ENCODE measurements at regions of chr18 and their contacts with region 1.

Region 1: DNA sequence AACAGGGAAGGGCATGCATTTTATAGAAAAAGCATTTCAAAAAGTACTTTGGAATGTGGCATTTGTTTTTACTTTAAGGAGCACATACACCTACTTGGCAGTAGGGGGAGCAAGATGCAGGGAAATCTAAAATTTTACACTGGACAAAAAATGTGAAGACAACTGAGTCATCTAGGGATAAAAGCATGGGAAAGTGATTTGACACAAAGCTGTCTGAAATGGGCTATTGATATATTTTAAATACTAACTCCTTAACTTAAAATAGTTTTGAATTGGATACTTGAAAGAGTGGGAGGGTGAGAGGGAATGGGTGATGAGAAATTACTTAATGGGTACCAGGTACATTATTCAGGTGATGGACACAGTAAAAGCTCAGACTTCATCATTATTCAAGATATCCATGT is 15.8 kb downstream of the TMEM200C start:
- DNase-seq: no peak
- ATAC-seq: peak in 1 of 8 donors; percentile 37
- H3K4me3 ChIP-seq: no peak overlapping the region
- H3K27ac ChIP-seq: no peak overlapping the region
- H3K4me1 ChIP-seq: no peaks in the 10 kb centered on the region
- H3K27me3 ChIP-seq: peaks cover 0 to 47% (median 24%) of the 10 kb centered on the region in 7 donors
- CTCF ChIP-seq: peak; percentile 70 to 89 (median 81)

Region 2: DNA sequence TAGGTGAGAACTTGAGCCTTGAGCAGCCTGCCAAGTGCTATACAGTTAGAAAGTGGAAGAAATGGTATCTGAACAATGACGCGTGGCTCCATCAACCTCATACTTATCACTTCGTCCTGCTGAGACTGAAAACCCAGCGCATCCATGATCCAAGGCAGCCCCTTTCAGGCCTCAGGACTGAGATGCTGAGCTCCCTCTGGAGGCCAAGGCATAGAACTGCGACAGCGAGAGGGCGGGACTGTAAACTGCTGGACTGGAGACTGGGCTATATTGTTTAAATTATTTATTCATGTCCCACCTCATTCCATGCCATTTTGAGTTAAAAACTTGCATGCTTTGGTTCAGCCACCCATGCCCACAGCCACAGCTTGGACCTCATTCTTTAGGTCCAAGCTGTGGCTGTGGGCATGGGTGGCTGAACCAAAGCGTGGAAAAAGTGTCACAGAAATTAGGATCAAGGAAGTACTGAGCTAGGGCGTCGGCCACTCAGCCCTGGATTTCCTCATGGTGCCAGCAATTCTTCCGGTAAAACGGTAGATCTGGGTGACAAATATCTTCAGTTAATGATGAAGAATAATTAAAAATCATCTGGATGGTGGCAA is 339.7 kb after region 1 on chr18:
- intact Hi-C with region 1: loop called (anchors 2 to 10 kb)
- DNase-seq: peak; percentile 12 to 15
- ATAC-seq: peak in 6 of 8 donors; percentile 43 to 80 (median 64)
- H3K4me3 ChIP-seq: no peak overlapping the region
- H3K27ac ChIP-seq: no peak overlapping the region
- H3K4me1 ChIP-seq: no peaks in the 10 kb centered on the region
- H3K27me3 ChIP-seq: no peaks in the 10 kb centered on the region
- CTCF ChIP-seq: peak; percentile 38 to 74 (median 66)

Region 3: DNA sequence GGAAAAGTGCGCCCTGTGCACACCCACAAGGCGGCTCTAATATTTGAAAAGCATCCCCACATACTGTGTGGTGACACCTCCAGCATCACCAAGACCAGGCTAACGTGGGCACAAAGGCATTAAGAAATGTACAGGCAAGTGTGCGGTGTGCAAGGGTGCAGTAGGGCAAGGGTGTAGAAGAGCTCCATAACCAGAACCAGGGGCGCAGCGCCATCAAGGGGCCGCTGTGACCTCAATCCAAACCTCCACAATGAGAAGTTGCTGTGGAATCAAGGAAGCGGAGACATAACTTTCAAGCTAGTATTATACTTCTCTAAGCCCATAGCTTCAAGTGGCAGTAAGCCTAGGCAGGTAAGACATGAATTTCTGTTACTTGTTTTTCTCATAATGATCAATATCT is 522.2 kb after region 1 on chr18:
- intact Hi-C with region 1: loop called in 2 of 10 experiments (anchors 10 kb)
- DNase-seq: no peak
- ATAC-seq: no peak
- H3K4me3 ChIP-seq: no peak overlapping the region
- H3K27ac ChIP-seq: no peak overlapping the region
- H3K4me1 ChIP-seq: peaks cover 0 to 10% (median 0%) of the 10 kb centered on the region in 9 donors
- H3K27me3 ChIP-seq: peaks cover 0 to 7% (median 0%) of the 10 kb centered on the region in 7 donors
- CTCF ChIP-seq: peak in 5 of 9 donors; percentile 14 to 48 (median 36)

Region 4: GRCh38 chr18:6482198-6482977 is 602.9 kb after region 1 on chr18:
- intact Hi-C with region 1: loop called in 9 of 10 experiments (anchors 1 to 5 kb)
- DNase-seq: peak; percentile 54 to 75
- ATAC-seq: peak; percentile 94 to 99 (median 96)
- H3K4me3 ChIP-seq: no peak overlapping the region
- H3K27ac ChIP-seq: no peak overlapping the region
- H3K4me1 ChIP-seq: peaks cover 0 to 23% (median 0%) of the 10 kb centered on the region in 9 donors
- H3K27me3 ChIP-seq: peaks cover 0 to 7% (median 0%) of the 10 kb centered on the region in 7 donors
- CTCF ChIP-seq: peak; percentile 63 to 93 (median 84)

Region 5: GRCh38 chr18:6487968-6488367 is 608.5 kb after region 1 on chr18:
- intact Hi-C with region 1: loop called in 7 of 10 experiments (anchors 2 to 5 kb)
- DNase-seq: no peak
- ATAC-seq: no peak
- H3K4me3 ChIP-seq: no peak overlapping the region
- H3K27ac ChIP-seq: no peak overlapping the region
- H3K4me1 ChIP-seq: no peaks in the 10 kb centered on the region
- H3K27me3 ChIP-seq: peaks cover 0 to 11% (median 0%) of the 10 kb centered on the region in 7 donors
- CTCF ChIP-seq: no peak

Region 6: DNA sequence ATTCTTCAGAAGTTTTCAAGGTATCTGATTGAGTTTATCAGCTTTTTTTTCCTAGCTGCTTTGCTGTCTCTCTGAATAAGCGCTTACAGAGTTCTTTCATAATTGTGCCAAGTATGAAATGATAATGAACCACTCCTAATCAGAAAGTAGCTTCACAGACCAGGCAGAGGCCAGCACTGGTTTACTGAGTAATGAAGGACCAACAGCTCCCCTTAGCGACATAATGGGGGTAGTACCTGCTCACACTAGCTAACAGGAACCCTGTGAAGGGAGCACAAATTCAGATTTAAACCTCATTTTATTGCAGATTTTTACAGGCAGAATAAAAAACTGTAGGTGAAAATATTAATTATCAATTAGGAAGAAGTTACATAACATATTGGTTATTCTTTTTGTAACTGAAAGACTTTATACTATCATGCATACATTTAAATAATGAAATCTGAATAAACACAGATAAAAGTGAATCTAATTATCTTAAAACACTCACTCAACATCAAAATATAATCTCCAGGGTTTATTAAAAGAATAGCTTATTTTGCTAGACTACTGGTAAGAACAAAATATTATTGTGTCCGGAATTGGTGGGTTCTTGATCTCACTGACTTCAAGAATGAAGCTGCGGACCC is 1297.7 kb after region 1 on chr18:
- intact Hi-C with region 1: loop called in 1 of 10 experiments (anchors 10 kb)
- DNase-seq: peak in 1 of 2 donors; percentile 18
- ATAC-seq: peak; percentile 75 to 94 (median 81)
- H3K4me3 ChIP-seq: no peak overlapping the region
- H3K27ac ChIP-seq: no peak overlapping the region
- H3K4me1 ChIP-seq: no peaks in the 10 kb centered on the region
- H3K27me3 ChIP-seq: peaks cover 0 to 15% (median 0%) of the 10 kb centered on the region in 7 donors
- CTCF ChIP-seq: peak in 8 of 9 donors; percentile 40 to 75 (median 64)